Dorsolateral prefrontal cortex (tissue), 120 donors: ENCODE measurements at regions of chr1 and their contacts with region 1.

Region 1: GRCh38 chr1:66242646-66243547 is 291.1 kb upstream of the SGIP1 start:
- DNase-seq: peak; percentile 86 to 94 (median 90)
- H3K4me3 ChIP-seq: peak overlapping the region in 7 of 59 donors; percentile 8 to 29 (median 14)
- H3K27ac ChIP-seq: peak overlapping the region; percentile 46 to 97 (median 90)
- H3K27me3 ChIP-seq: no peaks in the 10 kb centered on the region
- CTCF ChIP-seq: peak; percentile 86 to 100 (median 100)

Region 2: GRCh38 chr1:65958561-65959350 is 284.1 kb before region 1 on chr1:
- intact Hi-C with region 1: loop called (anchors 1 to 2 kb)
- DNase-seq: peak in 1 of 10 donors; percentile 8
- H3K4me3 ChIP-seq: peak overlapping the region in 29 of 59 donors; percentile 1 to 56 (median 25)
- H3K27ac ChIP-seq: peak overlapping the region in 55 of 59 donors; percentile 1 to 99 (median 71)
- H3K27me3 ChIP-seq: no peaks in the 10 kb centered on the region
- CTCF ChIP-seq: peak; percentile 74 to 100 (median 88)

Region 3: GRCh38 chr1:65992165-65992840 is 250.6 kb before region 1 on chr1:
- intact Hi-C with region 1: loop called (anchors 5 kb)
- DNase-seq: peak in 9 of 10 donors; percentile 12 to 82 (median 60)
- H3K4me3 ChIP-seq: peak overlapping the region; percentile 38 to 85 (median 66)
- H3K27ac ChIP-seq: peak overlapping the region; percentile 50 to 95 (median 89)
- H3K27me3 ChIP-seq: no peaks in the 10 kb centered on the region
- CTCF ChIP-seq: peak in 47 of 56 donors; percentile 4 to 63 (median 36)

Region 4: GRCh38 chr1:66048011-66048410 is 194.9 kb before region 1 on chr1:
- intact Hi-C with region 1: loop called in 1 of 2 experiments (anchors 5 kb)
- DNase-seq: no peak
- H3K4me3 ChIP-seq: peak overlapping the region in 1 of 59 donors; percentile 6
- H3K27ac ChIP-seq: peak overlapping the region in 40 of 59 donors; percentile 4 to 94 (median 60)
- H3K27me3 ChIP-seq: no peaks in the 10 kb centered on the region
- CTCF ChIP-seq: no peak

Region 5: DNA sequence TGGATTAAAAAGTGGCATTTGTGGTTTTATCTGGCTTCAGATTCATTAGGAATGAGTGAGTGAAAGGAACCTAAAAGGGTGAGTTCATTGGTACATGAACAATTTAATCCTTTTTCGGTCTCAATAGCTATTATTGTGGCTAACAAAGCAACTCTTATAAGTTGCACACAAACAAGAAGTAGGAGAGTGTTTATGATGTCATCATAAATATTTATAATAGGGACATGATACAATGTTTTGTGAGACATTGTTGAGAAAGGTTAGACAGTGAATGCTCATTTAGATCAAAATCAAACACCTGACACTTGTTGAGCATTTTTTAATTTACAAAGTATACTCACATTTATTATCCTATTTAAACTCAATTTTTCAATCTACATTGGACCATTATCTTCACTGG is 86.8 kb before region 1 on chr1:
- intact Hi-C with region 1: loop called in 1 of 2 experiments (anchors 5 kb)
- DNase-seq: no peak
- H3K4me3 ChIP-seq: peak overlapping the region in 1 of 59 donors; percentile 18
- H3K27ac ChIP-seq: peak overlapping the region; percentile 19 to 97 (median 89)
- H3K27me3 ChIP-seq: no peaks in the 10 kb centered on the region
- CTCF ChIP-seq: peak in 1 of 56 donors; percentile 9

Region 6: DNA sequence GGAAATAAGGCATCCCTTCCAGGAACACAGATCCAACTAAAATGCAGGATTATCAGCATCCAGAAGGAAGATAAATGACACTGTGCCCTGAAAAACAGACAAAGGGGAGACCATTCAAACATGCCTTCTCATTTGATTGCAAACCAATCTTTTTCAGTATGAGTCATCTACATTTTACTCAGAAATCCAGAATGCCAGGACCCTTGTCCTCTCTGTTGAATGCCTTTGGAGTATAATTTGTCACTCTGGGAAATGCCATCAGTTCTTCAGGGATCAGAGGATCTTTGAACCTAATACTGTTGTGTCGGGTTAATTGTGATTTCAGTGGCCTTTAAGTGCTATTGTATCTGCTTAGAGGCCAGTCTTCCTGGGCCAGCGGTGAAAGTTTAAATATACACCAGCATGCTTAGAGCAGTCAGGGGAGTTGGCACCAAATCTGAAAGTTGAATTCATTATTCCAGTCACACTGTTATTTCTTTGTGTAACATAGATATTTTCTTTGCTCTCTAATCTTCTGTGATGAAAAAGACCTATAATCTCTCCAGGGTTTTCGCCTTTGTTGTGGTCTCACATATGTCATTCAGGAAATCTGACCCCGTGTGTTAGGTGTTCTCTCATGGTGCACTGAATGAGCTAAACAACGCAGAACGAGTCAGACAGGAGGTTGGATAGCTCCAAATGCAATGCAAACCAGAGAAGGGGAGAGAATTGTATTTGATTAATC is 73.8 kb before region 1 on chr1:
- intact Hi-C with region 1: loop called (anchors 5 kb)
- DNase-seq: no peak
- H3K4me3 ChIP-seq: peak overlapping the region in 20 of 59 donors; percentile 4 to 36 (median 15)
- H3K27ac ChIP-seq: peak overlapping the region in 56 of 59 donors; percentile 7 to 87 (median 73)
- H3K27me3 ChIP-seq: no peaks in the 10 kb centered on the region
- CTCF ChIP-seq: no peak

Region 7: GRCh38 chr1:66374561-66375111 is 131.7 kb after region 1 on chr1:
- intact Hi-C with region 1: no loop called
- DNase-seq: no peak
- H3K4me3 ChIP-seq: no peak overlapping the region
- H3K27ac ChIP-seq: peak overlapping the region in 56 of 59 donors; percentile 9 to 91 (median 81)
- H3K27me3 ChIP-seq: no peaks in the 10 kb centered on the region
- CTCF ChIP-seq: no peak